ENCODE measurements at regions of chr12 and their contacts with region 1.

Region 1: GRCh38 chr12:52213512-52214420 is 19.3 kb upstream of the KRT7 start:
- DNase-seq: peak; percentile 42
- H3K4me3 ChIP-seq: no peak overlapping the region
- CTCF ChIP-seq: peak; percentile 99

Region 2: DNA sequence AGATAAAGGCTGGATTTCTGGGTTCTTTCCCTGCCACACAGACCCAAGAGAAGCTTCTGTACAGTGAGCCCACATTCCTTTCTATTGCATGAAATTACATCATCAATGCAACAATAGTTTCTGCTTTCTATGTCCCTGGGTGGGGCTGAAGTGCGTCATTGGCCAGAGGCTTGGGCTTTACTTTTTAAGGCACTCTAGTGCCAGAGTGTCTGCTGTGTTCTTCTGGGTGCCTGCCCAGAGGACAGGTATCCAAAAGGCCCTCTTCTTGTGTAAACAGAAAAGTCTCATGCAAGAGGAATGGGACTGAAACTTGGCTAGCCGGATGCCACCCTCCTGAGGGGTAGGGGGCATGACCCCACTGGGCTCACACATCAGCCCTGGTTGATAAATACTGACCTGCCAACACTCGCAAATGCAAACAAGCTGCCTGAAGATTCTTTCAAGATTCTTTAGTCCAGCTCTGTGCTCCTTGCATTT is 66.6 kb after region 1 on chr12:
- in situ Hi-C with region 1: loop called (anchors 5 kb)
- DNase-seq: peak; percentile 83
- H3K4me3 ChIP-seq: no peak overlapping the region
- CTCF ChIP-seq: no peak

Measured in astrocyte of the cerebellum (primary cell).